Ascending aorta (tissue), 2 donors: ENCODE measurements at regions of chr2 and their contacts with region 1.

Region 1: GRCh38 chr2:177332041-177332991 is 60.3 kb upstream of the AGPS start:
- DNase-seq: no peak
- H3K4me3 ChIP-seq: peak overlapping the region; percentile 15 to 33
- H3K27ac ChIP-seq: peak overlapping the region; percentile 39 to 55
- H3K4me1 ChIP-seq: peaks cover 0 to 5% of the 10 kb centered on the region in 2 donors
- H3K27me3 ChIP-seq: no peaks in the 10 kb centered on the region
- CTCF ChIP-seq: peak; percentile 51 to 69 (median 67)

Region 2: GRCh38 chr2:176126929-176127773 is 1205.2 kb before region 1 on chr2:
- intact Hi-C with region 1: loop called (anchors 10 kb)
- DNase-seq: peak in 1 of 2 donors; percentile 81
- H3K4me3 ChIP-seq: no peak overlapping the region
- H3K27ac ChIP-seq: no peak overlapping the region
- H3K4me1 ChIP-seq: peaks cover 10 to 17% of the 10 kb centered on the region in 2 donors
- H3K27me3 ChIP-seq: no peaks in the 10 kb centered on the region
- CTCF ChIP-seq: peak; percentile 78 to 89 (median 86)

Region 3: DNA sequence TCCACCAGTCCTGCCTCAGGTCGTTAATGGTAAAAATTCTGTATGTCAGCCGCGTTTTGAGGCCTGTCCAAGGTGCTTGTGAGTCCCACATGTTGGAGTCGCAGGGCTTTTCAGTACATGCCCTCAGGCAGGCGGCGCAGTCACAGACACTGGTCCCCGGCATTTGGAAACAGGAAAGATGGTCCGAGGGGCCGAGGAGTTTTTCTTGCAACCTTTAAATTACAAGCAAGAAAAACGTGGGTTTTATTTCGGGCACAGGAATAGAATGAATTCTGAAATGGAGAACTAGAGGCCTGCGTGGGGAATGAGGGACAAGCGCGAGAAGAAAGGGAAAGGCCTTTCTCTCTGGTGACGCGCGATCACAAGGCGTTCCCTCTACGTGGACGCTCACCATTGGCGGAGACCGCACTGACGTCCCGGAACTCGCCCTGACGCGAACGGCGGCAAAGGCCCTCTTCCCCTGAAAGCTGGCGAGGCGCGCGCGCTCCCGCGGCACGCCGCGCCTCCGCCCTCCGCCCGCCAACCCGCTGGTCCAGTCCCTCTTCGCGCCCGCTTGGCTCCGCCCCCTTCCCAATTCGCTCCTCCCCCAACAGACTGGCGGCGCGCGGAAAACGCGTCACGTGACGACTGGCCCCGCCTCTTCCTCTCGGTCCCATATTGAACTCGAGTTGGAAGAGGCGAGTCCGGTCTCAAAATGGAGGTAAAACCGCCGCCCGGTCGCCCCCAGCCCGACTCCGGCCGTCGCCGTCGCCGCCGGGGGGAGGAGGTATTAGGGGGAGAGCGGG is 120.0 kb before region 1 on chr2 and contains the start of gene HNRNPA3:
- intact Hi-C with region 1: loop called (anchors 1 kb)
- DNase-seq: peak; percentile 96 to 99
- H3K4me3 ChIP-seq: peak within 1 kb of the TSS; percentile 78 to 99
- H3K27ac ChIP-seq: peak within 1 kb of the TSS; percentile 97 to 100
- H3K4me1 ChIP-seq: peaks cover 20 to 35% of the 10 kb centered on the region in 2 donors
- H3K27me3 ChIP-seq: no peaks in the 10 kb centered on the region
- CTCF ChIP-seq: peak; percentile 10 to 32 (median 11)
- total RNA-seq, gene HNRNPA3: 32.9 TPM

Region 4: GRCh38 chr2:177275041-177276020 is 57.0 kb before region 1 on chr2:
- intact Hi-C with region 1: loop called (anchors 5 kb)
- DNase-seq: no peak
- H3K4me3 ChIP-seq: peak overlapping the region; percentile 27 to 46
- H3K27ac ChIP-seq: peak overlapping the region; percentile 65 to 79
- H3K4me1 ChIP-seq: peaks cover 0 to 21% of the 10 kb centered on the region in 2 donors
- H3K27me3 ChIP-seq: no peaks in the 10 kb centered on the region
- CTCF ChIP-seq: no peak

Region 5: GRCh38 chr2:177392373-177393202 is 60.3 kb after region 1 on chr2 and contains the start of gene AGPS:
- intact Hi-C with region 1: no loop called
- DNase-seq: peak; percentile 12 to 84
- H3K4me3 ChIP-seq: peak within 1 kb of the TSS; percentile 75 to 76
- H3K27ac ChIP-seq: peak within 1 kb of the TSS; percentile 44 to 56
- H3K4me1 ChIP-seq: peaks cover 0 to 6% of the 10 kb centered on the region in 2 donors
- H3K27me3 ChIP-seq: no peaks in the 10 kb centered on the region
- CTCF ChIP-seq: peak in 1 of 3 experiments; percentile 18
- total RNA-seq, gene AGPS: 15.9 TPM

Region 6: DNA sequence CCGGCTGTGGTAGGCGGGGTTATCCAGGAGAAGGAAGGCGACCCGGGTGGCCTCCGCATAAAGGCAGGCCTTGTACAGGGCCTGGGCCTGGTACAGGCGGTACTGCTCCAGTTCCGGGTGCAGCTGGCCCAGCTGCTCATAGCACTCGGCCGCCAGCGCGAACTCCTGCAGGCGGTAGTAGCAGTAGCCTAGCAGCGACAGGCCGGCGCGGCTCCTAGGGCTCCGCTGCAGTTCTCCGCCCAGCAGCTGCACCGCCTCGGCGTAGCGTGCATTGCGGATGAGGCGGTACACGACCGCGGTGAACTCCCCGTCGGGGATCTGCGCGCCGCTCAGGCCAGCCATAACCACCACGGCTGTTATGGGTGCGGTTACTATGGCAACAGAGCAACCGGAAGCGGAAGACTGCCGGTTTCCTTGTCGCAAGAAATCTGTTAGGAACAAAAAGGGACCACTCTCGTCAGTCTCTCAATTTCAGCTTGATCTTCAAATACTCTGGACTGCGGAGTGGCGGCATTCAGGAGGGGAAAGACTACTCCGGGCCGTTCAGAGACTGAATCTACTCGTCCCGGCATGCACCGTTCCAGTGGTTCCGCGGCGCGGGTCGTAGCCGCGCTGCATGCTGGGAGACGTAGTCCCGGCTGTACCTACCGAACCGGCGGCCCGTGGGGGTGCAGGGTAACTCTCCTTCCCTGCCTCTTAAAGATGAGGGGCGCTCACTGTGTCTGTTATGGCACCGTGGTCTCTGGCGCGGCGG is 220.3 kb after region 1 on chr2:
- intact Hi-C with region 1: loop called (anchors 5 kb)
- DNase-seq: peak; percentile 46 to 92
- H3K4me3 ChIP-seq: peak overlapping the region; percentile 89 to 96
- H3K27ac ChIP-seq: peak overlapping the region; percentile 87 to 95
- H3K4me1 ChIP-seq: peaks cover 0 to 3% of the 10 kb centered on the region in 2 donors
- H3K27me3 ChIP-seq: no peaks in the 10 kb centered on the region
- CTCF ChIP-seq: no peak

Region 7: DNA sequence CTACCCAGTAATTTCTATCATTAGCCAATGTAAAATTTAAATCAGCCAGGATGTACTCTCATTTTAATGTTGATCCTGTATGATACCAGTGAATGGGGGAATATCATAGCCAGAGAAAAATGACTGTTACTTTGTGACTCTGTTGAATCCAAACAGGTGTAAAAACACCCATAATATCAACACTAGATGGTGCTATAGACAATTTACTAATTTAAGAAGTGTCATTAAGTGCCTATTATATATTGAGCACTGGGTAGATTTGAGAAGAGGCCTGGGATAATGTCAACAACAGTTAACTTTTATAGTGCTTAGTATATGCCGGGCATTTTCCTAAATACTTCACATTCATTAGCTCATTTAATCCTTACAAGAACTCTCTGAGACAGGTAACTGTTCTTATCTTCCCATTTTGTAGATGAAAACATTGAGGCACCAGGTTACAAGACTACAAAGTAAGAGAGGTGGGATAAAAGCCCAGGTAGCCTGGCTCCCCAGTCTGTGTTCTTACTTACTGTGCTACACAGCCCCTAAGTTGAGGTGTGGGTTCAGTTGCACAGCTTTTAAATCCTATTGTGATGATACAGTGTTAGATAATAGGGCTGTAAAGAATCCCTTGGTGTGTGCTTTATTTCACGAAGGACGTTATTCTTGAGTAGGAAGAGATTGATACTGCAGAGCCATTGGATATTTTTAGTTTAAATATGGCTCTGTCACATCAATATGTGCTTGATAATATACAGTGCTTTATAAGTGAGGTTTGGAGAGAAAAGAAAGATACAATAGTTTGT is 385.7 kb after region 1 on chr2:
- intact Hi-C with region 1: loop called (anchors 5 kb)
- DNase-seq: no peak
- H3K4me3 ChIP-seq: no peak overlapping the region
- H3K27ac ChIP-seq: no peak overlapping the region
- H3K4me1 ChIP-seq: no peaks in the 10 kb centered on the region
- H3K27me3 ChIP-seq: no peaks in the 10 kb centered on the region
- CTCF ChIP-seq: no peak